Activated naive CD4-positive, alpha-beta T cell treated with anti-CD3 and anti-CD28 coated beads for 36 hours (primary cell): ENCODE measurements at regions of chr15 and their contacts with region 1.

Region 1: GRCh38 chr15:69713726-69714559 is 261.3 kb downstream of the RPLP1 start:
- DNase-seq: peak; percentile 90
- H3K4me3 Mint-ChIP-seq: no peak overlapping the region
- H3K27ac Mint-ChIP-seq: peak overlapping the region; percentile 73
- H3K4me1 Mint-ChIP-seq: peaks cover 55% of the 10 kb centered on the region
- H3K27me3 Mint-ChIP-seq: no peaks in the 10 kb centered on the region

Region 2: GRCh38 chr15:69679623-69680228 is 34.2 kb before region 1 on chr15:
- CTCF ChIA-PET with region 1: no interaction called
- intact Hi-C with region 1: loop called (anchors 1 kb)
- DNase-seq: peak; percentile 77
- H3K4me3 Mint-ChIP-seq: no peak overlapping the region
- H3K27ac Mint-ChIP-seq: no peak overlapping the region
- H3K4me1 Mint-ChIP-seq: peaks cover 19% of the 10 kb centered on the region
- H3K27me3 Mint-ChIP-seq: peaks cover 9% of the 10 kb centered on the region

Region 3: DNA sequence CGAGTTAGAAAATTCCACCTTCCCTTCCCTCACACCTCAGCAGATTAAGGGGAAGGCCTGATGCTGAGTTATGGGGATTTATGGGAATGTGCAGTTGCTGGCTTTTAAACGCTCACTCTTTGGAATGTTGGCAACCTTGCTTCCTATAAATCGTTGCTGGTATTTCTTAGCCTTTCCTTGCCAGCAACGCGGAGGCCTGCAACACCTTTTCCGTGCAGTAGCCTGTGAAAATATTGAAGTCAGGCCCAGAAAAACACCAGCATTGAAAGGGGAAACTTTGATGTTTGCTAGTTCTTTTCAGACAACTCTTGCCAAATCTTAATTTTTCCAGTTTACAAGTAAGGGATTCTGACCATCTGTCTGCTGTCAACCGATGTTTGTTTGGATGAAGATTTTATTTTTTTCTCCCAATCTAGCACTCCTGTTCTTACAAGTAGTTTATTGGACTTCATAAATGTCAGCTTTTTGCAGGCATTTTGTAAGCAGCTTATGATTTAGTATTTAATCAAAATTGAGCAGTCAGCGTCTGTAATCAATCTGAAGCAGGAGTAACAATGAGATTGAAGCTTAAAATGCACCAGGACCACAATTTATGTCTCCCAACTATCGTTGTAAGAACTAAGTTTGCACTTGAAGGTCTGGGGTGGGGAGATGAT is 10.3 kb before region 1 on chr15:
- CTCF ChIA-PET with region 1: no interaction called
- intact Hi-C with region 1: no loop called
- DNase-seq: no peak
- H3K4me3 Mint-ChIP-seq: no peak overlapping the region
- H3K27ac Mint-ChIP-seq: no peak overlapping the region
- H3K4me1 Mint-ChIP-seq: no peaks in the 10 kb centered on the region
- H3K27me3 Mint-ChIP-seq: no peaks in the 10 kb centered on the region

Region 4: GRCh38 chr15:70234256-70234905 is 520.4 kb after region 1 on chr15:
- CTCF ChIA-PET with region 1: no interaction called
- intact Hi-C with region 1: loop called (anchors 10 kb)
- DNase-seq: peak; percentile 69
- H3K4me3 Mint-ChIP-seq: no peak overlapping the region
- H3K27ac Mint-ChIP-seq: peak overlapping the region; percentile 55
- H3K4me1 Mint-ChIP-seq: peaks cover 26% of the 10 kb centered on the region
- H3K27me3 Mint-ChIP-seq: peaks cover 2% of the 10 kb centered on the region

Region 5: DNA sequence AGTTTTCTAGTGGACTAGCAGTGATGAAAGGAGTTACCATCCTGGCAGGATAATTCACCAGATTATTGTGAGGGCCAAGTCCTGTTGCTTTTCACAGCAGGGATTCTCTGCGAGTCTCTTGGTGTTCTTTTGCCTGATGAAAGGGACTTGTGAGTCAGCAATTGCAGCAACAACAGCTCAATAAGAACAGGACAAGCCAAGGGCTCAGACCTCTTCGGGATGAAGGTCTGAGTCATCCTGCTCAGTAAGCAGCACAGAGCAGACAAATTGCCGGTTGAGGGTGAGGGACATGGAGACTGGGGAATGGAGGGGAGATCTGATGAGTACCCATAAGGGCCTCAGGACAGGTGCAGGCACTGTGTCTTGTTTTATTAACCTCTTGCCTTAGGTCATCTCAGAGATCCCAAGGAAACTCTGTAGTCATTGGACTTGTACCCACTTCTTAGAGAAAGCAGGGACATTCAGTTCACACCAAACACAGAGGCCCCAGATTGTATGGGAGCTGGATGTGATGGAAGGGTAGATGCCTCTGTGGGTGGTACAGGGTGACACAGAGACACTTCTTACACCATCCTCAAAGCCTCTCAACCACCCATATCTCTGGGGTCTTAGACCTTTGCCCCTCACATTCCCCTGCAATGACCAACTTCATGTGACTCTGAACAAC is 557.6 kb after region 1 on chr15:
- CTCF ChIA-PET with region 1: no interaction called
- intact Hi-C with region 1: loop called (anchors 10 kb)
- DNase-seq: peak; percentile 35
- H3K4me3 Mint-ChIP-seq: no peak overlapping the region
- H3K27ac Mint-ChIP-seq: no peak overlapping the region
- H3K4me1 Mint-ChIP-seq: peaks cover 29% of the 10 kb centered on the region
- H3K27me3 Mint-ChIP-seq: no peaks in the 10 kb centered on the region